ENCODE measurements at regions of chr14 and their contacts with region 1.

Region 1: DNA sequence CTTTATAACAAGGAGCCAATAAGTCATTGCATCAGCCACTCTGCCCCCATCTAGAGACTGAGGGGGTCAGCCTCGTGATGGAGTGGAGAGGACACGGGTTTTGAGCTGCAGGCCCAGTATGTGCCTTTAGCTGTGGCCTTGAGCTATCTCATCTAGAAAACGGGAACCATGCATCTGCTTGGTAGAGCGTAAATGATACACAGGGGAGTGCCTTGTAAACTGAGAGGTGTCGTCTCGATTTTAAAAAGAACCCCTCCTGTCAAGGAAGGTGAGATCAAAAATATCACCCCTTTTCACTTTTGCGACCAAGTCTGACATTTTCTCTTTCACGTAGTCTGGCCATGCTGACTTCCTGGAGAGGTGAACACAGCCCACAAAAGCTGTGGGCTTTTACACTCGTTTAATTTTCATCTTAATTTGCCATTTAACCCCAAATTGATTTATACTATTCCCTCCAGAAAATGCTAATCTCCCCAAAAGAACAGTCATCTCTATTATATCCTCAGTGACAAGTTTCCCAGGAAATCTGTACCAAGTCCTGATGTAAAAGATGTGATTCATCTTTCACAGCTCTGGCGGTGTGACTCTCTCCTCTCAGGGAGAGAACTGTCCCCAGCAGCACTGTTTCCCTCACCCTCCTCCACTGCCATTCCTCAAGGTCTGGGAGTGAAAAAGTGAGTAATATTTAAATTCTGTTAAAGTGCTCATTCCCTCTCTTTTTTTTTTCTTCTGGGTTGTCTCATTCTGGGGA is 30.6 kb downstream of the VCPKMT start:
- DNase-seq: peak; percentile 21 to 48 (median 28)
- H3K4me3 ChIP-seq: no peak overlapping the region
- H3K4me3 Mint-ChIP-seq: peak overlapping the region; percentile 23 to 78 (median 71)
- H3K27ac ChIP-seq: peak overlapping the region; percentile 99
- H3K27ac Mint-ChIP-seq: peak overlapping the region; percentile 83 to 99 (median 95)
- H3K4me1 ChIP-seq: peaks cover 88% of the 10 kb centered on the region
- H3K4me1 Mint-ChIP-seq: peaks cover 58 to 89% (median 76%) of the 10 kb centered on the region in 4 donors
- H3K27me3 ChIP-seq: no peaks in the 10 kb centered on the region
- H3K27me3 Mint-ChIP-seq: no peaks in the 10 kb centered on the region

Region 2: GRCh38 chr14:49879683-49880204 is 206.0 kb before region 1 on chr14:
- CTCF ChIA-PET with region 1: interaction called, 11 read pairs
- POLR2A ChIA-PET with region 1: interaction called, 6 read pairs
- intact Hi-C with region 1: no loop called
- DNase-seq: peak; percentile 63 to 72 (median 65)
- H3K4me3 ChIP-seq: no peak overlapping the region
- H3K4me3 Mint-ChIP-seq: no peak overlapping the region
- H3K27ac ChIP-seq: no peak overlapping the region
- H3K27ac Mint-ChIP-seq: peak overlapping the region; percentile 67 to 89 (median 82)
- H3K4me1 ChIP-seq: peaks cover 15% of the 10 kb centered on the region
- H3K4me1 Mint-ChIP-seq: peaks cover 6 to 12% (median 8%) of the 10 kb centered on the region in 4 donors
- H3K27me3 ChIP-seq: no peaks in the 10 kb centered on the region
- H3K27me3 Mint-ChIP-seq: no peaks in the 10 kb centered on the region

Region 3: GRCh38 chr14:49946320-49947141 is 139.2 kb before region 1 on chr14:
- CTCF ChIA-PET with region 1: no interaction called
- POLR2A ChIA-PET with region 1: interaction called, 15 read pairs
- intact Hi-C with region 1: no loop called
- DNase-seq: peak; percentile 40 to 67 (median 41)
- H3K4me3 ChIP-seq: peak overlapping the region in 1 of 2 donors; percentile 11
- H3K4me3 Mint-ChIP-seq: peak overlapping the region; percentile 1 to 78 (median 67)
- H3K27ac ChIP-seq: peak overlapping the region; percentile 64
- H3K27ac Mint-ChIP-seq: peak overlapping the region; percentile 90 to 97 (median 94)
- H3K4me1 ChIP-seq: peaks cover 69% of the 10 kb centered on the region
- H3K4me1 Mint-ChIP-seq: peaks cover 59 to 91% (median 72%) of the 10 kb centered on the region in 4 donors
- H3K27me3 ChIP-seq: no peaks in the 10 kb centered on the region
- H3K27me3 Mint-ChIP-seq: no peaks in the 10 kb centered on the region

Region 4: GRCh38 chr14:50018201-50018932 is 67.4 kb before region 1 on chr14:
- CTCF ChIA-PET with region 1: no interaction called
- POLR2A ChIA-PET with region 1: no interaction called
- intact Hi-C with region 1: no loop called
- DNase-seq: no peak
- H3K4me3 ChIP-seq: no peak overlapping the region
- H3K4me3 Mint-ChIP-seq: no peak overlapping the region
- H3K27ac ChIP-seq: no peak overlapping the region
- H3K27ac Mint-ChIP-seq: no peak overlapping the region
- H3K4me1 ChIP-seq: peaks cover 12% of the 10 kb centered on the region
- H3K4me1 Mint-ChIP-seq: peaks cover 14 to 32% (median 18%) of the 10 kb centered on the region in 4 donors
- H3K27me3 ChIP-seq: no peaks in the 10 kb centered on the region
- H3K27me3 Mint-ChIP-seq: no peaks in the 10 kb centered on the region

Region 5: DNA sequence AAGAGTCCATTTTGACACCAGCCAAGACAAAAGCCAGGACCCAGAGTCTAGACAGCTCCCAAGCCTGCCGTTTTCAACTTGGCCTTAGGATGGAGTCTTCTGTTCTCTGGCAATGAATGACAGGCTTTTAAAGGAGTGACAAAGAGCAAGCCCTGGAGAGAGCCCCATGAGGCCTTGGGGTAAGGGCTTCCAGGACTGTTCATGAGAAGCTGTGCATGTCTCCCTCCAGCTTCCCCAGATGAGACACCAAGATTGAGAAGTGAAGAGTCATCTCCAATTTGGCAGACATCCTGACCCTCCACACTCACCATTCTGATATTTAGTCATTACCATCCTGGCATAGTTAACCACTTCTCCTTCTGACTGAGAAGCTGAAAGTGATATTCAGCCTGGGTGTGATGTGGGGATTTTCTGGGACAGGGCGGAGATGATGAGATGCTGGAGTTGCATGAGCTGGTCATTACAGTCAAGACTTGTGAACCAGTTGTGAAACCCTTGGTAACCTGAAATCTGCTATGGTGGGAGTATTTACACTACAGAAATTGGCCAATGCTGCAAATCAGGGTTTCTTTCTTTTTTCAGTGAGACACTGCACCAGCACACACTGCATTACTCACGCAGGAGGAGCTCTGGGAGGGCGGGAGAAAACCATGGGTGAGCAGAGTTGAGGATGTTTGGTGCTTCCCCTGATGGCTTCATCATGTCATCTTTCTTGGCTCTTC is 47.2 kb before region 1 on chr14:
- CTCF ChIA-PET with region 1: interaction called, 3 read pairs
- POLR2A ChIA-PET with region 1: interaction called, 48 read pairs
- intact Hi-C with region 1: no loop called
- DNase-seq: peak in 2 of 5 donors; percentile 10 to 63
- H3K4me3 ChIP-seq: no peak overlapping the region
- H3K4me3 Mint-ChIP-seq: peak overlapping the region in 7 of 8 donors; percentile 37 to 92 (median 73)
- H3K27ac ChIP-seq: peak overlapping the region; percentile 28
- H3K27ac Mint-ChIP-seq: peak overlapping the region; percentile 81 to 96 (median 93)
- H3K4me1 ChIP-seq: peaks cover 59% of the 10 kb centered on the region
- H3K4me1 Mint-ChIP-seq: peaks cover 38 to 71% (median 57%) of the 10 kb centered on the region in 4 donors
- H3K27me3 ChIP-seq: no peaks in the 10 kb centered on the region
- H3K27me3 Mint-ChIP-seq: no peaks in the 10 kb centered on the region

Region 6: GRCh38 chr14:50067723-50068495 is 17.8 kb before region 1 on chr14:
- CTCF ChIA-PET with region 1: interaction called, 53 read pairs
- POLR2A ChIA-PET with region 1: interaction called, 193 read pairs
- intact Hi-C with region 1: no loop called
- DNase-seq: no peak
- H3K4me3 ChIP-seq: no peak overlapping the region
- H3K4me3 Mint-ChIP-seq: no peak overlapping the region
- H3K27ac ChIP-seq: no peak overlapping the region
- H3K27ac Mint-ChIP-seq: peak overlapping the region in 3 of 7 donors; percentile 17 to 72 (median 70)
- H3K4me1 ChIP-seq: peaks cover 38% of the 10 kb centered on the region
- H3K4me1 Mint-ChIP-seq: peaks cover 34 to 56% (median 42%) of the 10 kb centered on the region in 4 donors
- H3K27me3 ChIP-seq: no peaks in the 10 kb centered on the region
- H3K27me3 Mint-ChIP-seq: no peaks in the 10 kb centered on the region

Region 7: DNA sequence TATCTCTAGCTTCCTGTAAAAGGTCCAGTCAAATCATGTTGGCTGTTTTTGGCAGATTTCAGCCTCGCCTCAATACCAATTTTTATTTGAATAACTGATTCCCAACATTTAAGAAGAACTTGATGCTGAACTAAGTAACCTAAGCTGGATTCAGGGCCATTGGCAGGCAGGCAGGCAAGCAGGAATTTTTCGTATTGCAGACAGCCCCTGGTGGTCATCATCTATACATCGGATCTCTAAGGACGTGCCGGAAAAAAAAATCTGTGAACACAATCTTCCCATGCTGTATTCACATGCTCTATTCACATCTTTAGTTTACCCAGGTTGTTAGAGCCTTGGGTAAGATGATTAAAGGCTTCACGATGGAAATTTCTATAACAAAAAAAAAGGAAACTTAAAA is 23.6 kb after region 1 on chr14:
- CTCF ChIA-PET with region 1: interaction called, 19 read pairs
- POLR2A ChIA-PET with region 1: interaction called, 15 read pairs
- intact Hi-C with region 1: loop called (anchors 1 kb)
- DNase-seq: no peak
- H3K4me3 ChIP-seq: no peak overlapping the region
- H3K4me3 Mint-ChIP-seq: no peak overlapping the region
- H3K27ac ChIP-seq: no peak overlapping the region
- H3K27ac Mint-ChIP-seq: peak overlapping the region in 5 of 7 donors; percentile 19 to 56 (median 37)
- H3K4me1 ChIP-seq: peaks cover 15% of the 10 kb centered on the region
- H3K4me1 Mint-ChIP-seq: peaks cover 6 to 25% (median 14%) of the 10 kb centered on the region in 4 donors
- H3K27me3 ChIP-seq: no peaks in the 10 kb centered on the region
- H3K27me3 Mint-ChIP-seq: no peaks in the 10 kb centered on the region

Region 8: DNA sequence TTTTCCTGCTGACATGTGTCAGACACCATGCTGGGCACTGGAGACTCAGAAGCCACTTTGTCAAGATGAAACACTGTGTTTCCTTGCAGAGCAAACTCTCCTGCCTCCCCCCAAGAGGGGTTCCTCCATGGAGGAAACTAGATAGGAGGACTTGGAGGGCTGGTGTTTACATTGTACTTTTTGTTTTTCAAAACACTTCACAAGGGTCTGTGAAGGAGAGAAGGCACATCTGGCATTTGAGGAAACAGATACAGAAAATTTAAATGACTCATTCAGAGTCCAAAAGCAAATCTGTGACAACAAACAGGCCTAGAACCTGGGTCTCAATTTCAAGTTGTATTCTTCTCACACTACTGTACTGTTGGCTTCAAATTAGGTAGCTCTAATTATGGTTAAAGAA is 317.7 kb after region 1 on chr14:
- CTCF ChIA-PET with region 1: no interaction called
- POLR2A ChIA-PET with region 1: no interaction called
- intact Hi-C with region 1: no loop called
- DNase-seq: no peak
- H3K4me3 ChIP-seq: no peak overlapping the region
- H3K4me3 Mint-ChIP-seq: no peak overlapping the region
- H3K27ac ChIP-seq: no peak overlapping the region
- H3K27ac Mint-ChIP-seq: no peak overlapping the region
- H3K4me1 ChIP-seq: no peaks in the 10 kb centered on the region
- H3K4me1 Mint-ChIP-seq: peaks cover 7 to 9% (median 8%) of the 10 kb centered on the region in 4 donors
- H3K27me3 ChIP-seq: no peaks in the 10 kb centered on the region
- H3K27me3 Mint-ChIP-seq: no peaks in the 10 kb centered on the region

Measured in CD4-positive, alpha-beta memory T cell (primary cell).